AG04450 (cell line): ENCODE measurements at regions of chr1 and their contacts with region 1.

Region 1: GRCh38 chr1:11907275-11908094 is 18.7 kb downstream of the KIAA2013 start:
- DNase-seq: peak; percentile 91
- H3K4me3 ChIP-seq: peak overlapping the region; percentile 18; the same call in 1 of the 2 replicates
- H3K27ac ChIP-seq: peak overlapping the region; percentile 99
- H3K27me3 ChIP-seq: no peaks in the 10 kb centered on the region
- CTCF ChIP-seq: peak; percentile 83

Region 2: DNA sequence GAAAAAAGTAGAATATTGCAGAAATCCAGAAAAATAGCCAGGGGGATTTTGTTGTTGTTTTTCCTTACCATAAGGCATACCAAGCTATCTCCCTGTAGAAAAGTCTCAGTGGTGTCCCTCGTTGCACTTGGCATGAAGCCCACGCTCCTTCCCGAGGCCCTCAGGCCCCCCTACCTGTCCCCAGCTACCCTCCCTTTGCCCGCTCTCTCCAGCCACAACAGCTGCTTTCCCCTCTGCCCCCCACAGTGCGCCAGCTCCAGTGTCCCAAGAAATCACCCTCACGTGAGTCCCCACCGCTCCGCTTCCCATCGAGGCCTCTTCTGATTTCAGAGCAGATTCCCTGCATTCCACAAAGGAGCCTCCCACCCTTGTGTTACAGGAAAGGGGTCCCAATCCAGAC is 163.2 kb before region 1 on chr1:
- CTCF ChIA-PET with region 1: no interaction called
- POLR2A ChIA-PET with region 1: no interaction called
- DNase-seq: no peak
- H3K4me3 ChIP-seq: no peak overlapping the region
- H3K27ac ChIP-seq: no peak overlapping the region
- H3K27me3 ChIP-seq: no peaks in the 10 kb centered on the region
- CTCF ChIP-seq: no peak

Region 3: GRCh38 chr1:11805447-11806306 is 101.8 kb before region 1 on chr1 and contains the starts of genes CLCN6 and MTHFR:
- CTCF ChIA-PET with region 1: no interaction called
- POLR2A ChIA-PET with region 1: interaction called, 22 read pairs
- DNase-seq: peak; percentile 97
- H3K4me3 ChIP-seq: peak within 1 kb of the TSS; percentile 84
- H3K27ac ChIP-seq: peak within 1 kb of the TSS; percentile 94
- H3K27me3 ChIP-seq: no peaks in the 10 kb centered on the region
- CTCF ChIP-seq: no peak
- polyA plus RNA-seq, gene CLCN6: 9.0 and 10.7 TPM in 2 replicates
- polyA plus RNA-seq, gene MTHFR: 7.7 and 8.8 TPM in 2 replicates

Region 4: DNA sequence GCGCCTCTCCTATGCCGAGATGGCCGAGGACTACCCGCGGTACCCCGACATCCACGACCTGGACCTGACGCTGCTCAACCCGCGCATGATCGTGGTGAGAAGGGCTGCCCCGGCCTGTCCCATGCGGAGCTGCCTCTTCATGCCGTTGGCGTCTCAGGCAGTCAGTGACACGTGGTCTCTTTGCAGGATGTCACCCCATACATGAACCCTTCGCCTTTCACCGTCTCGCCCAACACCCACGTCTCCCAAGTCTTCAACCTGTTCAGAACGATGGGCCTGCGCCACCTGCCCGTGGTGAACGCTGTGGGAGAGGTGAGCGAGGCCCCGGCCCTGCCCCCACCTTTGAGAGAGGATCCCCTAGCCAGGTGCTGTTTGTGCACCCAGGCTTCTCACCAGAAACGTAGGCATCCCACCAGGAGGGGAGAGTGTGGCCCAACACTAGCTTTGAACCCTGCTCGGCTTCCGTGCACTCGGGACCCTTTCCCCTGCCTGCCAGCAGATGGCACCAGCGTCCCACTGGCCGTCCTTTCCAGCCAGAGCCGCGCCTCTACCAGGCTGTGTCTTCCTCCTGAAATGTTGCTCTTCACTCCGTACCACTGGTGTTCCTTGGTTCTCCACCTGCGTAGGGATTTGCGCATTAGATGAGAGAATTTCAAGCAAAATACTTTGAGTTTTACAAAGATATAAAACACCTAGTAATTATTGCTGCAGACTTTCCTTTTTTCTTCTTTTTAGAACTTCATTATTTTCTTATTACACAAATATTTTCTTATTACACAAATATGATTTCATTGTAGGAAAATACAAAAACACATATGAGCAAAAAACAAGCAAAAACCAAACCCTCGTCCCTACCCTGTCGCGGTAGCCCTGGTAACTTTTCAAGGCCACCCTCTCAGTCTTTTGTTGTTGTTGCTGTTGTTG is 68.9 kb before region 1 on chr1:
- CTCF ChIA-PET with region 1: interaction called, 7 read pairs
- POLR2A ChIA-PET with region 1: interaction called, 31 read pairs
- DNase-seq: no peak
- H3K4me3 ChIP-seq: no peak overlapping the region
- H3K27ac ChIP-seq: no peak overlapping the region
- H3K27me3 ChIP-seq: no peaks in the 10 kb centered on the region
- CTCF ChIP-seq: peak; percentile 99

Region 5: DNA sequence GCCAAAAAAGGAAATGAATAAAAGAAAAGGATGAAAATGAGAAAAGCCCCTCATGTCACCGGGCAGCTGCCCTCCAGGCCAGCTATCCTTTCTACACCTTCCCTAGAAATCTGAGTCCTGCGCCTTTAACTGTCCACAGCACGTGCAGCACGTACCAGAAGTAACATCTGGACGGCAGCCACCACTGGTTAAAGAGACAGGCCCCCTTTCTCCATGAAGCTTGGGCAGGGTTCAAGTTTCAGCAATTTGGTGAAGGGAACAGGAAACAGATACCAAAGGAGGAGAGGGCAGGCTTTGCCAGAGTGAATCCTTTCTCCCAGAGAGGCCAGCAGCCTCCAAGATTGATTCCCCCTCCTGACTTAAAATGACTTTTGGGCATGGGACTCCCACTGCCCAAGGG is 22.4 kb after region 1 on chr1:
- CTCF ChIA-PET with region 1: interaction called, 5 read pairs
- POLR2A ChIA-PET with region 1: interaction called, 45 read pairs
- DNase-seq: no peak
- H3K4me3 ChIP-seq: no peak overlapping the region
- H3K27ac ChIP-seq: no peak overlapping the region
- H3K27me3 ChIP-seq: no peaks in the 10 kb centered on the region
- CTCF ChIP-seq: no peak

Region 6: GRCh38 chr1:11967028-11967547 is 59.6 kb after region 1 on chr1:
- CTCF ChIA-PET with region 1: no interaction called
- POLR2A ChIA-PET with region 1: interaction called, 11 read pairs
- DNase-seq: no peak
- H3K4me3 ChIP-seq: no peak overlapping the region
- H3K27ac ChIP-seq: no peak overlapping the region
- H3K27me3 ChIP-seq: no peaks in the 10 kb centered on the region
- CTCF ChIP-seq: peak; percentile 41

Region 7: GRCh38 chr1:12019858-12020509 is 112.5 kb after region 1 on chr1:
- CTCF ChIA-PET with region 1: no interaction called
- POLR2A ChIA-PET with region 1: interaction called, 22 read pairs
- DNase-seq: no peak
- H3K4me3 ChIP-seq: peak overlapping the region; percentile 88
- H3K27ac ChIP-seq: no peak overlapping the region
- H3K27me3 ChIP-seq: no peaks in the 10 kb centered on the region
- CTCF ChIP-seq: no peak